Prostate gland (tissue), 2 donors: ENCODE measurements at regions of chr11 and their contacts with region 1.

Region 1: GRCh38 chr11:122101625-122102291 is 14.3 kb downstream of the BLID start:
- DNase-seq: peak; percentile 51
- H3K4me3 ChIP-seq: peak overlapping the region; percentile 24 to 32
- H3K27ac ChIP-seq: peak overlapping the region; percentile 76 to 77
- H3K4me1 ChIP-seq: no peaks in the 10 kb centered on the region
- H3K27me3 ChIP-seq: peaks cover 3% of the 10 kb centered on the region
- CTCF ChIP-seq: peak in 3 of 4 experiments; percentile 41 to 59 (median 53)
- POLR2A ChIP-seq: no peak

Region 2: DNA sequence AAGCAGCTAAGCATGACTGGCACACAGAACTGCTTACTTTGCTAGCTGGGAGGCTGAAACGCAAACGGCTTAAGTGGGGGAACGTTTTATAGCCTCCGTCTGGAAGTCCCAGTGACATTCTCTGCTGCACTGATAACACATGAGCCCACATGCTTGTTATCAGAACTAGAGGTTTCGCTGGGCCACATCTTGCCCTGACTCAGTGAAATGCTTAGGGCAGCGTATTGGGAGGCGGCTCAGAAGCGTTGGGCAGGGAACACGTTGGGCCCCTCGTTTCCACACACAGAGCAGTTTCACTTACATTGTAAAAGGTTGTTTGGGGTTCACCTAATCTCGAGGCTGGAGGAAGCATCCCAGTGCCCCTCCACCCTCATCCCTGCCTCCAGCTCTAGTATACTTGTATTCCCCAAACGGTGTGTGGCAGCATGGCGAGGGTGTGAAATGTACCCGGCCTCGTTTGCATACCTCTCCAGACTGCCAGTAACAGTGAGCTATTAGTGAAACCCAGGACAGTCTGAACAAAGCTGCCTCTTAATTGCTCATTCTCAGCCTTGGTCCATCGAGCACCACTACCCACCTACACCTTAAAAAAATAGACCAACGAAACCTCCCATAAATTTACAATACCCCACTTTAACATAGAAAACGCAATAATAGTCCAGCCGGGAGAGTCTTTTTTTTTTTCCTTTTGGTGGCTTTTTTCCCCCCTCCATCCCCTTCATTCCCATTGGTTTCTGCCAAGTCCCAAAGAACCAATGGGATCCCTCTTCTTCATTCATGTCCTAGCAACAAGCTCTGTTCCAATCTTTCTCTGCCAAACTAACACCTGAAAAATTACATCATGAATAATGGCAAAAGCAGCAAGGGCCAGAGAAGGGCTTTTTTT is 430.2 kb before region 1 on chr11:
- intact Hi-C with region 1: loop called (anchors 5 kb)
- DNase-seq: no peak
- H3K4me3 ChIP-seq: no peak overlapping the region
- H3K27ac ChIP-seq: peak overlapping the region; percentile 39 to 44
- H3K4me1 ChIP-seq: no peaks in the 10 kb centered on the region
- H3K27me3 ChIP-seq: no peaks in the 10 kb centered on the region
- CTCF ChIP-seq: no peak
- POLR2A ChIP-seq: no peak

Region 3: DNA sequence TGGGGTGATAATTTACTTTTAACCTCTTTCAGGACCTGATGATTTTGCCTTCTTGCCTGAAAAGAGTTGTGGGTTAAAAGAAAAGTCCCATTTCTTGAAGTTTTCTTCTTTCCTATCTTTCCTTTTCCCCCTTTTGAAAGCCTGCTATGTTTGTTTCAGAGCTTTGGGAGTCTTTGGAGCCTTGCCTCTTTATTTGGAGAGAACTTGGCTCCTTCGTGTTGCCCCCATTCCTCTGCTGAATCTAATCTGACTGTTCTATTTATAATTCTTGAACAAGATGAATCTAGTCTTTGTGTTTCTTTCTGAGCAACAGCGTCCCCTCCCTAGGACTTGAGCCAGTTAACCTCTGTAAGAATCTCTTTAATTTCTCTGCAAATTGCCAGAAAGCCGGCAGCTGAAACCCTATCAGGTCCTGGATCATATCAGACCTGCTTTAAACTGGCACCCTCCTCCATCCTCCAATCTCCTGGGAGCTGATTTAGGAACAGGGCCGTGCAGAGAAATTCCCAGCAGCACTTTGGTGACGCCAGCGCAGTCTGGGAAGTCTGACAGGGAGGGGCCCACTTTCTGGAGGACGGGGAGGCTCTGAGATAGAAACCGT is 359.9 kb before region 1 on chr11:
- intact Hi-C with region 1: loop called (anchors 5 kb)
- DNase-seq: peak; percentile 7
- H3K4me3 ChIP-seq: no peak overlapping the region
- H3K27ac ChIP-seq: peak overlapping the region; percentile 53 to 60
- H3K4me1 ChIP-seq: no peaks in the 10 kb centered on the region
- H3K27me3 ChIP-seq: no peaks in the 10 kb centered on the region
- CTCF ChIP-seq: no peak
- POLR2A ChIP-seq: no peak

Region 4: GRCh38 chr11:122126024-122126688 is 24.4 kb after region 1 on chr11:
- intact Hi-C with region 1: no loop called
- DNase-seq: no peak
- H3K4me3 ChIP-seq: no peak overlapping the region
- H3K27ac ChIP-seq: no peak overlapping the region
- H3K4me1 ChIP-seq: no peaks in the 10 kb centered on the region
- H3K27me3 ChIP-seq: no peaks in the 10 kb centered on the region
- CTCF ChIP-seq: no peak
- POLR2A ChIP-seq: no peak

Region 5: GRCh38 chr11:122159173-122159721 is 57.5 kb after region 1 on chr11:
- intact Hi-C with region 1: loop called (anchors 5 kb)
- DNase-seq: no peak
- H3K4me3 ChIP-seq: no peak overlapping the region
- H3K27ac ChIP-seq: peak overlapping the region; percentile 78
- H3K4me1 ChIP-seq: peaks cover 5% of the 10 kb centered on the region
- H3K27me3 ChIP-seq: no peaks in the 10 kb centered on the region
- CTCF ChIP-seq: no peak
- POLR2A ChIP-seq: no peak

Region 6: DNA sequence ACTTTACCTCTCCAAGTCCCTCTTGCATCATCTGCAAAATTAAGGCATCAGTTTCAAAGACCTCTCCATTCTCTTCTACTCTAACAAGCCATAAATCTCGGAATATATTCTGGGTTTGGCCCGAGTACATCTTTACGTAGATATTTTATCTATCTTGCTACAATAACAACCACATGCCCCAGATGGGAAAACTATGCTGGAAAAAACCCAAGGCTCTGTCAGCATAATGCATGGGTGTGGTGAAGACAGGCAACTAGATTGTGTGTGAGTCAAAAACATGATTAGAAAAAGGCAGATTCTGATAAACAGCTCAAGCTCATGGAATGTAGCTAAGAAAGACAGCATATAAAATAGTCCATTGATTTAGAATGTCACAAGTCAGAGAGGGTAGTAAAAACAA is 242.5 kb after region 1 on chr11:
- intact Hi-C with region 1: no loop called
- DNase-seq: no peak
- H3K4me3 ChIP-seq: no peak overlapping the region
- H3K27ac ChIP-seq: no peak overlapping the region
- H3K4me1 ChIP-seq: no peaks in the 10 kb centered on the region
- H3K27me3 ChIP-seq: no peaks in the 10 kb centered on the region
- CTCF ChIP-seq: no peak
- POLR2A ChIP-seq: no peak